ENCODE measurements at regions of chr5 and their contacts with region 1.

Region 1: GRCh38 chr5:64784451-64785025 is 15.8 kb downstream of the CWC27 start:
- DNase-seq: peak in 4 of 5 donors; percentile 50 to 73 (median 58)
- ATAC-seq: peak in 2 of 4 donors; percentile 60 to 67
- H3K4me3 ChIP-seq: no peak overlapping the region
- H3K27ac ChIP-seq: no peak overlapping the region
- H3K4me1 ChIP-seq: no peaks in the 10 kb centered on the region
- H3K27me3 ChIP-seq: no peaks in the 10 kb centered on the region
- CTCF ChIP-seq: peak; percentile 70 to 94 (median 86)
- POLR2A ChIP-seq: no peak

Region 2: GRCh38 chr5:64229163-64229774 is 555.3 kb before region 1 on chr5:
- intact Hi-C with region 1: loop called in 1 of 10 experiments (anchors 10 kb)
- DNase-seq: no peak
- ATAC-seq: no peak
- H3K4me3 ChIP-seq: no peak overlapping the region
- H3K27ac ChIP-seq: no peak overlapping the region
- H3K4me1 ChIP-seq: no peaks in the 10 kb centered on the region
- H3K27me3 ChIP-seq: no peaks in the 10 kb centered on the region
- CTCF ChIP-seq: peak; percentile 51 to 78 (median 61)
- POLR2A ChIP-seq: no peak

Region 3: DNA sequence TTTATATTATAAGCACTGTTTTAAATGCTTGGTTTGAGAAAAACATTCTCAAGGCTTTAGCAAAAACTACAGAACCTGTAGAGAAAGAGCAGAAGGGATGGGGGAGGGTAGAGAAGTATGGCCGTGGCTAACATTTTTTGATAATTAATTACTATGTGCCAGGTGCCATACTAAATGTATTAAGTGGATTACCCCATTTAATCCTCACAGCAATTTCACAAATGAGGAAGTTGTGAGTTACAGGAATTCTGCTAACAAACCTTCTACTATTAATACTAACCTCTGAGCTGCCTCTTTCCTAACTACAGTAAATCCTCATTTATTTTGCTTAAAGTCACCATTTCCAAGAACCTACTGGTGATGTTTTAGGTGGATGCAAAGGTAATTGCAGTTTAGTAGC is 460.9 kb before region 1 on chr5:
- intact Hi-C with region 1: no loop called
- DNase-seq: no peak
- ATAC-seq: no peak
- H3K4me3 ChIP-seq: no peak overlapping the region
- H3K27ac ChIP-seq: no peak overlapping the region
- H3K4me1 ChIP-seq: no peaks in the 10 kb centered on the region
- H3K27me3 ChIP-seq: no peaks in the 10 kb centered on the region
- CTCF ChIP-seq: no peak
- POLR2A ChIP-seq: no peak

Region 4: DNA sequence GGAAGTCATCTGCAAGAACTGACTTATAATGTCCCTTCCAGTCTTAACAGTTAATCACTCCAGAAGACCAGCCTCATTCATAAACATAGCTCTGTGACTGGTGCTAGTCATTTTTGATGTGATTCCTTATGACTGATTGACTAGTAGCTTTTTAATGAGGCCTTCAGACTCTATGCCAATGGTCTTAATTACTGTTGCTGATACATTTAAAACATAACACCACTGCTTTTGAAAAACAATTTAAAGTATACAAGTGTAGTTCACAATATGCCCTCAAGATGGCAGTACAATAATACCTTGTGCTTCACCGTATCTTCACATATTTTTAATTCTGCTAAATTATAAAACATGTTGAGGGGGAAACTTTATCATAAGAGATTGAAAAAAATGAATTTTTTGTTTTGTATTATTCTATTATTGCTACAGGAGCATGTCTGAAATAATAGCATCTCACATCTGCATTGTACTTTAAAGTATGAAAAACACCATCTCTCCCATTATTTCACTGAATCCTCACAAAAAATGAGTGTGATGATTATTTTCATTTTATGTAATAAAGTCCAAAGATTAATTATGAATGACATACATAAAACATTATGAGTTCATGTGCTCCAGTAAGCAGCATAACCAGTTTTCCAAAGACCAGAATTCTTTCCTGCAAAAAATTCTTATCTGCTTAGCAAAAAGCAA is 149.4 kb before region 1 on chr5:
- intact Hi-C with region 1: loop called (anchors 1 to 2 kb)
- DNase-seq: no peak
- ATAC-seq: no peak
- H3K4me3 ChIP-seq: no peak overlapping the region
- H3K27ac ChIP-seq: no peak overlapping the region
- H3K4me1 ChIP-seq: peaks cover 0 to 6% (median 0%) of the 10 kb centered on the region in 12 donors
- H3K27me3 ChIP-seq: peaks cover 0 to 10% (median 0%) of the 10 kb centered on the region in 9 donors
- CTCF ChIP-seq: peak; percentile 69 to 90 (median 82)
- POLR2A ChIP-seq: no peak